Heart left ventricle (tissue), 16 donors: ENCODE measurements at regions of chr18 and their contacts with region 1.

Region 1: DNA sequence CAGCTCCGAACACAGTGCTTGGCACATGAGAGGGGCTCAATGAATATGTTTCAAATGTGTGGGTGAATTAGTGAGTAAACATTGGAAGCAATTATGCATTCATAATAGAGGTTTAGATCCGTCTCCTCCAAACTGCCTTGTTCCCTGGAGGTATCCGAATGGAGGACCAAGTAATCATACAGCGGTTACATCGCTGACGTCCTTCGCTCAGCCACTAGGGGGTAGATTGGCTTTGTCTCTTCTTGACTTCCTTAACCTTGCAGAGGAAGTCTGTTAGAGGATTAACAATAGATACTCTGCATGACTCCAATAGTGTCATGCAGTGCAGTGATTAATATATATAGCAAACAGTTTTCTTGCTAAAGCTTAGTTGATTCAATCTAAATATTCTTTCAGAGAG is 517.0 kb downstream of the PTPRM start:
- DNase-seq: peak in 3 of 5 donors; percentile 31 to 51 (median 40)
- ATAC-seq: peak; percentile 55 to 85 (median 78)
- H3K4me3 ChIP-seq: no peak overlapping the region
- H3K27ac ChIP-seq: no peak overlapping the region
- H3K4me1 ChIP-seq: peaks cover 0 to 23% (median 2%) of the 10 kb centered on the region in 12 donors
- H3K27me3 ChIP-seq: no peaks in the 10 kb centered on the region
- CTCF ChIP-seq: peak; percentile 35 to 69 (median 58)
- POLR2A ChIP-seq: no peak

Region 2: DNA sequence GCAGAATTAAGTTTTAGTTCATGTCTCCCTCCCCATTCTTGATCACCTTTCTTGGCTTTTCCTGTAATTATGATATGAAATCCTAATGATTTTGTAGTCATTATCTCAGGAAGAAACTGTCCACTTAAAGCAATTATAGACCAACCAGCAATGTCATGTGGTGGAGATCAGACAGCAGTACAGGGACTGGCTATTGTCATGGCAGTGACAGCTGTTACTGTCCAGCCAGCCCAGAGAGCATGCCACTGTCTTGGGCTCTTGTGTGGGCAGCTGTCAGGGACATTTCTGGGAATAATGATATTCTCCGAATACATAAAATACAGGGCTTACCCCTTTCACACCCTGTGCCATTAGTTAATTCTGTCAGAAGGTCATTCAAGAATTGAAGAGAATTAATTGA is 169.8 kb after region 1 on chr18:
- intact Hi-C with region 1: no loop called
- DNase-seq: peak in 3 of 5 donors; percentile 23 to 41 (median 33)
- ATAC-seq: peak; percentile 74 to 91 (median 80)
- H3K4me3 ChIP-seq: no peak overlapping the region
- H3K27ac ChIP-seq: peak overlapping the region in 2 of 12 donors; percentile 21 to 23
- H3K4me1 ChIP-seq: peaks cover 0 to 33% (median 10%) of the 10 kb centered on the region in 12 donors
- H3K27me3 ChIP-seq: no peaks in the 10 kb centered on the region
- CTCF ChIP-seq: no peak
- POLR2A ChIP-seq: no peak

Region 3: GRCh38 chr18:8367217-8367988 is 283.2 kb after region 1 on chr18:
- intact Hi-C with region 1: loop called in 1 of 10 experiments (anchors 10 kb)
- DNase-seq: peak in 4 of 5 donors; percentile 17 to 69 (median 27)
- ATAC-seq: peak in 3 of 4 donors; percentile 37 to 51 (median 41)
- H3K4me3 ChIP-seq: peak overlapping the region in 11 of 12 donors; percentile 21 to 54 (median 40)
- H3K27ac ChIP-seq: no peak overlapping the region
- H3K4me1 ChIP-seq: peaks cover 0 to 37% (median 13%) of the 10 kb centered on the region in 12 donors
- H3K27me3 ChIP-seq: no peaks in the 10 kb centered on the region
- CTCF ChIP-seq: peak; percentile 8 to 65 (median 47)
- POLR2A ChIP-seq: no peak

Region 4: GRCh38 chr18:8389391-8390340 is 305.5 kb after region 1 on chr18:
- intact Hi-C with region 1: loop called in 5 of 10 experiments (anchors 5 to 10 kb)
- DNase-seq: peak in 4 of 5 donors; percentile 47 to 67 (median 60)
- ATAC-seq: peak; percentile 81 to 92 (median 84)
- H3K4me3 ChIP-seq: no peak overlapping the region
- H3K27ac ChIP-seq: no peak overlapping the region
- H3K4me1 ChIP-seq: peaks cover 0 to 4% (median 0%) of the 10 kb centered on the region in 12 donors
- H3K27me3 ChIP-seq: no peaks in the 10 kb centered on the region
- CTCF ChIP-seq: peak; percentile 56 to 84 (median 76)
- POLR2A ChIP-seq: no peak